Tibial artery (tissue), 4 donors: ENCODE measurements at regions of chr3 and their contacts with region 1.

Region 1: DNA sequence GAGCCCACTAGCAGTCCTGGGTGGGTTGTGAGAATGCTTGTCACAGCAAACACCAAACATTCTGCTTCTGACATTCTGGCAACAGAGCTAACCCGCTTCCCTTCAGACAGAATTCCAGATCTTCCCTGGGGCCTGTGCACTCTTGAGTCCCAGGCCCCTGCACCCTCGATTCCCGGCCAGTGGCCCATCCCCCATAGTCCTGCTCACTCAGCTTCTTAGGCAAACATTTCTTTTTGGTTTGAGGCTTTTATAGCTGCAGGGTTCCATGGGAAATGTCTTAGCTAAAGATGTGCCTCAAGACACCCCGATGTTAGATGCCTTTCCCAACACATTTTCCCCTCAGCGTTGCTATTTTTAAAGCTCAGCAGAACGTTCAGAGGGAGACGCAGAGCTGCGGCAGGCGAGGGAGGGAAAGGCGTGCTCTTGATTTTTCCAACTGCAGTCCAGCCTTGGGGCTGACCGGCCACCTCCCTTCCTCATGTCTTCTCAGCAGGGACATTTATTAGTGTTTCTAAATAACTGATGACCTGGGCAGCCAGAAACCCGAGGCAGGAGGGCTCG is 35.2 kb downstream of the ABTB1 start:
- DNase-seq: peak in 1 of 2 donors; percentile 77
- H3K4me3 ChIP-seq: no peak overlapping the region
- H3K27ac ChIP-seq: peak overlapping the region; percentile 81 to 82
- H3K4me1 ChIP-seq: peaks cover 0 to 80% (median 44%) of the 10 kb centered on the region in 4 donors
- H3K27me3 ChIP-seq: no peaks in the 10 kb centered on the region
- CTCF ChIP-seq: no peak

Region 2: GRCh38 chr3:127667119-127667681 is 40.7 kb before region 1 on chr3:
- intact Hi-C with region 1: no loop called
- DNase-seq: no peak
- H3K4me3 ChIP-seq: no peak overlapping the region
- H3K27ac ChIP-seq: no peak overlapping the region
- H3K4me1 ChIP-seq: peaks cover 0 to 21% (median 9%) of the 10 kb centered on the region in 4 donors
- H3K27me3 ChIP-seq: no peaks in the 10 kb centered on the region
- CTCF ChIP-seq: no peak

Region 3: GRCh38 chr3:127747723-127748521 is 40.0 kb after region 1 on chr3:
- intact Hi-C with region 1: loop called (anchors 5 kb)
- DNase-seq: peak; percentile 95 to 98
- H3K4me3 ChIP-seq: no peak overlapping the region
- H3K27ac ChIP-seq: peak overlapping the region; percentile 75 to 90
- H3K4me1 ChIP-seq: peaks cover 3 to 66% (median 40%) of the 10 kb centered on the region in 4 donors
- H3K27me3 ChIP-seq: no peaks in the 10 kb centered on the region
- CTCF ChIP-seq: peak; percentile 19 to 37